K562 (cell line): ENCODE measurements at regions of chr15 and their contacts with region 1.

Region 1: DNA sequence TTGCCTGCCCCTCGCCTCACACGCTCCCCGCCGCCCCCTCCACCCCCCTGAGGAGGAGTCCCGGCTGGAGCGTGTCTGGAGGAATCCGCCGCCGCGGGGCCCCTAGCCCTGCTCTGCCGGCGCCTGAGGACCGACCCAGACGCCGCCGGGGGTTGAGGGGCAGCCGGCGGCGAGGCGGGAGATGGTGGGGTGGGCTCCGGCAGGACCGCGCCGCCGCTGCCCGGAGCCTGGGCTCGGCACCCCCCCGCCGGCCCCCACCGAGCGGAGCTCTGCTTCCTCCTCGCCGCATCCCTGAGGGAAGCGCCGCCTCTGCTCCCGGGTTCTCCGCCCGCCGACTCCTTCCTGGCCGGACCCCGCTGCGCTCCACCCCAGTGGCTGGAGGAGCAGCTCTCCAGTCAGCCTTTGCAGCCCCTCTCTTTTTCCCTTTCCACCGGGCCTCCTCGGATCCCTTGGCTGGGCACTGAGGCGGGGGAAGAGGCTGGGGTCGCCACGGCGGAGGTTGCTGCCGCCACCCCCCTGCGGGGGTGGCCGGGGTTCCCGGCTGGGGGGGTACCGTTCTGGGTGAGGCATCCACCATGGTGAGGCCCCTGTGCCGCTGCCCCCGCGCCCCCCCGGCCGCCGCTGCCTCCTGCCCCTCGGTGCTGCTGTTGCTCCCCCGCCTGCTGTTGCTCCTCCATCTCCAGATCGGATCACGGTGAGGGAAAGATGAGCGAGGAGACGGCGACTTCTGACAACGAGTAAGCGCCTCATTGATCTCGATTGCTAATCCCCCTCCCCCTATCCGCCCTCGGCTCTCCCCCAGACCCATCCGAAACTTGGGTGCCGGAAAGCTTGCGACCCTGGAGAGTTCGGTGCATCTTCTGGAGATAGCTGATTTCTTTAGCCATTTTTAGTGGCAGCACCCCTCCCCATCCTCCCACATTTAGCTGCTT is at the start of gene SPRED1:
- DNase-seq: peak; percentile 21 to 75 (median 48)
- ATAC-seq: peak; percentile 56
- H3K4me3 ChIP-seq: peak within 1 kb of the TSS; percentile 86
- H3K27ac ChIP-seq: peak within 1 kb of the TSS; percentile 83
- H3K4me1 ChIP-seq: peaks cover 0 to 7% of the 10 kb centered on the region in 2 experiments; a peak in 3 of 5 replicates
- H3K27me3 ChIP-seq: no peaks in the 10 kb centered on the region
- CTCF ChIP-seq: no peak
- EP300 ChIP-seq: no peak
- POLR2A ChIP-seq: no peak; the same call in 1 of the 2 replicates
- RAD21 ChIP-seq: no peak
- polyA plus RNA-seq, gene SPRED1: 2.8 to 3.6 TPM

Region 2: DNA sequence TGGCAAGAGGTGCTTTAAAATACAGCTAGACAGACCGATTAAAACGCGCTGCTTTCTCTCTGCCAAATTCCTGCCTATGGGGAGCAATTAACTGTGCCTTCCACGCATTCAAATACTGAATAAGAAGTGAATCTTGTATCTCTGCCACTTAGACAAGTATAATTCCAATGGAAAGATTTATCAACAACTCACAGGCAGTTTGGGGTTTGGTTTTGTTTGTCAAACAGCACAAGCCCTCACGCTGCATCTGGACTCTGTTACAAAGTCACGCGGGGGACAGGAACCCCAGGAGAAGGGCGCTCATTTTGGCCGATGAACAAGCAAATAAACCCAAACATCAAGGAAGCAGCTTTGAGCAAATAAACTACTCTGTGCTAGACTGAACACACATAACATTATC is 380.1 kb before region 1 on chr15:
- CTCF ChIA-PET with region 1: no interaction called
- POLR2A ChIA-PET with region 1: no interaction called
- in situ Hi-C with region 1: no loop called
- intact Hi-C with region 1: no loop called
- DNase-seq: no peak
- ATAC-seq: no peak
- H3K4me3 ChIP-seq: no peak overlapping the region
- H3K27ac ChIP-seq: no peak overlapping the region
- H3K4me1 ChIP-seq: no peaks in the 10 kb centered on the region
- H3K27me3 ChIP-seq: no peaks in the 10 kb centered on the region
- CTCF ChIP-seq: no peak
- EP300 ChIP-seq: no peak
- POLR2A ChIP-seq: no peak
- RAD21 ChIP-seq: no peak

Region 3: GRCh38 chr15:38207621-38208020 is 45.1 kb before region 1 on chr15:
- CTCF ChIA-PET with region 1: no interaction called
- POLR2A ChIA-PET with region 1: no interaction called
- in situ Hi-C with region 1: no loop called
- intact Hi-C with region 1: no loop called
- DNase-seq: no peak
- ATAC-seq: no peak
- H3K4me3 ChIP-seq: no peak overlapping the region
- H3K27ac ChIP-seq: no peak overlapping the region
- H3K4me1 ChIP-seq: no peaks in the 10 kb centered on the region
- H3K27me3 ChIP-seq: peaks cover 7 to 8% of the 10 kb centered on the region in 2 experiments; a peak in 3 of 5 replicates
- CTCF ChIP-seq: no peak
- EP300 ChIP-seq: no peak
- POLR2A ChIP-seq: no peak
- RAD21 ChIP-seq: no peak

Region 4: GRCh38 chr15:38263996-38264395 is 11.2 kb after region 1 on chr15:
- CTCF ChIA-PET with region 1: no interaction called
- POLR2A ChIA-PET with region 1: interaction called, 17 read pairs
- in situ Hi-C with region 1: no loop called
- intact Hi-C with region 1: no loop called
- DNase-seq: no peak
- ATAC-seq: peak; percentile 17; the same call in 1 of the 3 replicates
- H3K4me3 ChIP-seq: no peak overlapping the region
- H3K27ac ChIP-seq: no peak overlapping the region
- H3K4me1 ChIP-seq: no peaks in the 10 kb centered on the region; a peak in 2 of 5 replicates
- H3K27me3 ChIP-seq: no peaks in the 10 kb centered on the region
- CTCF ChIP-seq: no peak
- EP300 ChIP-seq: no peak
- POLR2A ChIP-seq: no peak
- RAD21 ChIP-seq: no peak

Region 5: GRCh38 chr15:38324939-38325647 is 72.3 kb after region 1 on chr15:
- CTCF ChIA-PET with region 1: no interaction called
- POLR2A ChIA-PET with region 1: interaction called, 3 read pairs
- in situ Hi-C with region 1: no loop called
- intact Hi-C with region 1: loop called (anchors 5 kb)
- DNase-seq: no peak
- ATAC-seq: no peak
- H3K4me3 ChIP-seq: no peak overlapping the region
- H3K27ac ChIP-seq: no peak overlapping the region
- H3K4me1 ChIP-seq: 0 out of 5 replicates have a peak, but pooled peaks cover 0 to 2% of the 10 kb centered on the region in 2 experiments
- H3K27me3 ChIP-seq: no peaks in the 10 kb centered on the region
- CTCF ChIP-seq: no peak
- EP300 ChIP-seq: no peak
- POLR2A ChIP-seq: no peak
- RAD21 ChIP-seq: no peak

Region 6: GRCh38 chr15:38354315-38354929 is 101.7 kb after region 1 on chr15:
- CTCF ChIA-PET with region 1: no interaction called
- POLR2A ChIA-PET with region 1: no interaction called
- in situ Hi-C with region 1: no loop called
- intact Hi-C with region 1: loop called (anchors 1 kb)
- DNase-seq: peak; percentile 39 to 73 (median 42)
- ATAC-seq: peak; percentile 92
- H3K4me3 ChIP-seq: no peak overlapping the region
- H3K27ac ChIP-seq: no peak overlapping the region
- H3K4me1 ChIP-seq: no peaks in the 10 kb centered on the region
- H3K27me3 ChIP-seq: no peaks in the 10 kb centered on the region
- CTCF ChIP-seq: peak; percentile 57 to 77 (median 77)
- EP300 ChIP-seq: no peak
- POLR2A ChIP-seq: no peak
- RAD21 ChIP-seq: peak; percentile 75 to 82